Sigmoid colon (tissue), 7 donors: ENCODE measurements at regions of chr10 and their contacts with region 1.

Region 1: DNA sequence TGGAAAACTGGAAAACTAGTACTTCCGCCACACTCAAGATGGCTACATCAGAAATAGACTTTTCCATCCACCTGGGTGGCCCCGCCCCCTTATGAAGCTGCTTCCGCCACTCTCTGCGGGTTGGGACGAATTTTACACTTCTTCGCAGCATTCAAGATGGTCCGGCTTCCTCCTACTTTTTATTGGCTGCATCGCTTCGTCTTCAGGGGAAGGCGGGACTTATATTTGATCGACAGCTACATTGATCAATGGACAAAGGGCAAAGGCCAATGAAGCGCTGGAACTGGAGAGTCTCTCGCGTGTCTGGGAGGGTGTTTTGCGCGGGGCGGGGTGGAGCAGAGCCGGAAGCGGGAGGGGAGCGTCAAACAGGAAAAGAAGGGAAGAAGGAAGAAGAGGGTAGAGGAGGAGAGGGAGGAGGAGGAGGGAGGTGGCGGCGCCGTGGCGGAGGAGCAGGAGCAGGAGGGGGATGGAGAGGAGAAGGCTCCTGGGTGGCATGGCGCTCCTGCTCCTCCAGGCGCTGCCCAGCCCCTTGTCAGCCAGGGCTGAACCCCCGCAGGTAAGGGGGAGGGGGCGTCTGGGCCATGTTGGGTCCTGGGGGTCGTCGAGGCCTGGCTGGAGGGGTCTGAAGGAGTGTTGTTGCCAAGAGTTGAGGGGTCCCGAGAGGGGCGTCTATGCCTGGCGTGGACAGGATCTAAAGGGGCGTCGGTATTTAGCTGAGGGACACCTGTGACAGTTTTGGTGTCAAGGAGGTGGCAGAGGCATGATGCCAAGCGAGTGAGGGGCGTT is at the start of gene WBP1L:
- DNase-seq: peak; percentile 99
- H3K4me3 ChIP-seq: peak within 1 kb of the TSS; percentile 69 to 99 (median 90)
- H3K27ac ChIP-seq: peak within 1 kb of the TSS; percentile 91 to 95 (median 92)
- H3K4me1 ChIP-seq: peaks cover 0 to 30% (median 25%) of the 10 kb centered on the region in 4 donors
- H3K27me3 ChIP-seq: no peaks in the 10 kb centered on the region
- CTCF ChIP-seq: no peak
- EP300 ChIP-seq: no peak
- POLR2A ChIP-seq: peak; percentile 91 to 96
- total RNA-seq, gene WBP1L: 83.8 to 148 (median 115) TPM

Region 2: GRCh38 chr10:102713814-102714620 is 29.8 kb before region 1 on chr10 and contains the start of gene ARL3:
- intact Hi-C with region 1: loop called (anchors 2 kb)
- DNase-seq: peak; percentile 99
- H3K4me3 ChIP-seq: peak within 1 kb of the TSS; percentile 86 to 100 (median 94)
- H3K27ac ChIP-seq: peak within 1 kb of the TSS; percentile 88 to 95 (median 90)
- H3K4me1 ChIP-seq: peaks cover 0 to 29% (median 17%) of the 10 kb centered on the region in 4 donors
- H3K27me3 ChIP-seq: no peaks in the 10 kb centered on the region
- CTCF ChIP-seq: peak in 3 of 4 experiments; percentile 56 to 69 (median 69)
- EP300 ChIP-seq: no peak
- POLR2A ChIP-seq: peak; percentile 55 to 66
- total RNA-seq, gene ARL3: 7.3 to 12.0 (median 9.3) TPM

Region 3: DNA sequence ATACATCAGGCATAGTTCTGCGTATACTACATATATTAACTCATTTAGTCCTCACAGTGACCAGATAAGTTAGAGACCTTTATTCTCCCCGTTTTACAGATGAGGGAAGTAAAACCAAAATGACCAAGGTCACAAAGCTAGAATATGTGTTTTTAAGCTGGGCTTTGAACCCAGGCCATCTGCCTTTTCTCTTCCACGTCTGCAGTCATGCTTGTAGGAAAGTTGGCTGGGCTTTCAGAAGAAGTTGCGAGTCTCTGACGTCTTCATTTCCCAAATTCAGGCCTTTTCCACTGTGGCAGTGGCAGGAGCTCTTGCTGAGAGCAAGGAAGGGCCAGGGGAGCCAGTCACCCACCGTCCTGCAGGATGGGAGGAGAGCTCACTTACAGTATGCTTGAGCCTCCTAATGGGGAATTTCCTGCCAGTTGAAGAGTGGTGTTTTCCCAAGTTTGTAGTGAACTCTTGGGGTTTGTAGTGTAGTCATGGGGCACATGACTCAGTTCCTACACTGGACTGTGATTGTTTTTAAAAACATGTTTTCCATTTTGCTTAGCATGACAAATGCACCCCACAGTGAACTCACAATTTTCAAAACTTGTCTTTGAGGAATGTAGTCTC is 59.2 kb after region 1 on chr10:
- intact Hi-C with region 1: loop called (anchors 5 kb)
- DNase-seq: peak; percentile 91
- H3K4me3 ChIP-seq: no peak overlapping the region
- H3K27ac ChIP-seq: peak overlapping the region; percentile 70 to 90 (median 84)
- H3K4me1 ChIP-seq: peaks cover 0 to 65% (median 58%) of the 10 kb centered on the region in 4 donors
- H3K27me3 ChIP-seq: no peaks in the 10 kb centered on the region
- CTCF ChIP-seq: no peak
- EP300 ChIP-seq: peak in 3 of 4 donors; percentile 28 to 72 (median 65)
- POLR2A ChIP-seq: no peak

Region 4: DNA sequence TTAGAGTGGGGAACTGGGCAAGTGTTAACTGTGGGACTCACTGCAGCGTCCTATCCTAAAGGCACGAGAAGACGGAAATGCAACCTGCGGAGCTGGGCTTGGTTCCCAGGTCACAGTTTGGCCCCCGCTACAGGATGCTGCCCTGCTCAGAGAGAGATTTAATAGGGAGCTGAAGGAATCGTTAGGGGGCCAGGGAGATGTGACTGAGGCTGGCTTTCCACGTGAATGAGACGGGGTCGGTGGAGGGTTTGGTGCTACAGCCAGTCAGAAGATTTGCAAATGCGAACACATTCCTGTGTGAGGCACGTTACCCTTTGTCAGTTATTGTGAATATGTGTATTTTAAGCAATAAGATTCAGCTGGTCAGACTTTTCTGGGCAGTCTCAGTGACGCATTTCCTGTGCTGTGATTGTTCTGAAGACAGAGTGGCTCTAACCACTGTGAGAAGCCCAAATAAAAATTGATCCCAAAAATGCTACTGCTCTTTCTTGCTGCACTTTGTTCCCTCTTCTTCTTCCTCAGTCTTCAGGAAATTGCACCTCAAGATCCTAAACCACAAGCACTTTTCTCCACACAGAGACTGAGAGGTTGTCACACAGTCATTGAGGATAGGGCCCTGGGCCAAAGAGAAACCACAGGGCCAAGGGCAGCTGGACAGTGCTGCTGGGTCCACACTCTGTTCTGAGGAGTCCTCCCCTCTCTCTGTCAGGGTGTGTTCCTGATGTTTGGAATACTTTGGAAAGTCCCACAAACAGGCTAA is 72.2 kb after region 1 on chr10:
- intact Hi-C with region 1: loop called (anchors 5 kb)
- DNase-seq: peak; percentile 87
- H3K4me3 ChIP-seq: no peak overlapping the region
- H3K27ac ChIP-seq: peak overlapping the region; percentile 79 to 91 (median 90)
- H3K4me1 ChIP-seq: peaks cover 0 to 38% (median 24%) of the 10 kb centered on the region in 4 donors
- H3K27me3 ChIP-seq: no peaks in the 10 kb centered on the region
- CTCF ChIP-seq: no peak
- EP300 ChIP-seq: peak; percentile 3 to 69 (median 48)
- POLR2A ChIP-seq: no peak